Endothelial cell of umbilical vein (primary cell): ENCODE measurements at regions of chr2 and their contacts with region 1.

Region 1: GRCh38 chr2:117814417-117815264 is at the start of gene DDX18:
- DNase-seq: peak; percentile 99
- H3K4me3 ChIP-seq: peak within 1 kb of the TSS; percentile 40 to 82 (median 60)
- H3K27ac ChIP-seq: peak within 1 kb of the TSS; percentile 89
- H3K4me1 ChIP-seq: peaks cover 10% of the 10 kb centered on the region
- H3K27me3 ChIP-seq: peaks cover 0 to 2% of the 10 kb centered on the region in 2 experiments
- CTCF ChIP-seq: peak; percentile 100
- POLR2A ChIP-seq: peak; percentile 87
- total RNA-seq, gene DDX18: 47.8 and 50.4 TPM in 2 replicates

Region 2: GRCh38 chr2:117621326-117621725 is 193.3 kb before region 1 on chr2:
- CTCF ChIA-PET with region 1: no interaction called
- POLR2A ChIA-PET with region 1: no interaction called
- dilution Hi-C with region 1: no loop called
- intact Hi-C with region 1: no loop called
- DNase-seq: no peak
- H3K4me3 ChIP-seq: no peak overlapping the region
- H3K27ac ChIP-seq: no peak overlapping the region
- H3K4me1 ChIP-seq: no peaks in the 10 kb centered on the region
- H3K27me3 ChIP-seq: no peaks in the 10 kb centered on the region
- CTCF ChIP-seq: no peak
- POLR2A ChIP-seq: no peak

Region 3: GRCh38 chr2:117679952-117680351 is 134.7 kb before region 1 on chr2:
- CTCF ChIA-PET with region 1: no interaction called
- POLR2A ChIA-PET with region 1: no interaction called
- dilution Hi-C with region 1: no loop called
- intact Hi-C with region 1: no loop called
- DNase-seq: no peak
- H3K4me3 ChIP-seq: no peak overlapping the region
- H3K27ac ChIP-seq: no peak overlapping the region
- H3K4me1 ChIP-seq: no peaks in the 10 kb centered on the region
- H3K27me3 ChIP-seq: no peaks in the 10 kb centered on the region
- CTCF ChIP-seq: no peak
- POLR2A ChIP-seq: no peak

Region 4: DNA sequence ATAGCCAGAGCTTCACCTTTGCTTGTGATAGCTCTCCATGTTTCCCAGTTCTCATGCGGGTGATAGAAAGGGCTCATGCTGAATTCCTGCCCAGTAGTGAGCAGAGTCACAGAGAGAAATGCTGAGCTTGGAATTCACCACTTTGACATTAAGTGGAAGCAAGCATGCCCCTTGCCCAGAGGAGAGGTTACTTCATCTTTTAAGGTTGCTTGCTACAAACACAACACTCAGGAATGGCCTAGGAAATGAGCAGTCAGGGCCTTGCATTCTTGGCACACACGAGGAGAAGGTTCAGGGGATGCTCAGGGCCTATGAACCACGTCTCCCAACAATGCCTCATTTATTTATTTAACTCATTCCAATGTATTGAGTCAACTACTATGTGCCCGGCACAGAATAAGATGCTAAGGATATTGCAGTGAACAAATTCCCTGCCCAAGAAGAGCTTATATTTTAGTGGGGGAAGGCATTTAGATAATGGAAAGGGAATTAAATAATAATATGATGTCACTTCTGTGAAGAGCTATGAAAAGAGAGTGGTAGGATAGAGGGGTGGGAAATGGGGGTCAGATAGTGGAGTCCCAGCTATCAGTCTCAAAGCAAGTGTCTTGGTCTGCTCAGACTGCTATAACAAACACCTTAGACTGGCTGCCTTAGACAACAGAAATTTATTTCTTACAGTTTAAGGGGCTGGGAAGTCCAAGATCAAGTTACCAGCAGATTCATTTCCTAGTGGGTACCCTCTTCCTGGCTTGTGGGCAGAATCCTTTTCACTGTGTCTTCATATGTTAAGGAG is 42.0 kb after region 1 on chr2:
- CTCF ChIA-PET with region 1: interaction called, 5 read pairs
- POLR2A ChIA-PET with region 1: interaction called, 3 read pairs
- dilution Hi-C with region 1: no loop called
- intact Hi-C with region 1: loop called (anchors 1 kb)
- DNase-seq: peak; percentile 88
- H3K4me3 ChIP-seq: no peak overlapping the region
- H3K27ac ChIP-seq: peak overlapping the region; percentile 73
- H3K4me1 ChIP-seq: peaks cover 22% of the 10 kb centered on the region
- H3K27me3 ChIP-seq: peaks cover 7 to 12% of the 10 kb centered on the region in 2 experiments
- CTCF ChIP-seq: no peak
- POLR2A ChIP-seq: peak; percentile 4

Region 5: GRCh38 chr2:117917223-117917917 is 102.7 kb after region 1 on chr2:
- CTCF ChIA-PET with region 1: interaction called, 11 read pairs
- POLR2A ChIA-PET with region 1: no interaction called
- dilution Hi-C with region 1: no loop called
- intact Hi-C with region 1: no loop called
- DNase-seq: no peak
- H3K4me3 ChIP-seq: no peak overlapping the region
- H3K27ac ChIP-seq: no peak overlapping the region
- H3K4me1 ChIP-seq: no peaks in the 10 kb centered on the region
- H3K27me3 ChIP-seq: no peaks in the 10 kb centered on the region
- CTCF ChIP-seq: no peak
- POLR2A ChIP-seq: no peak